ENCODE measurements at regions of chr1 and their contacts with region 1.

Region 1: DNA sequence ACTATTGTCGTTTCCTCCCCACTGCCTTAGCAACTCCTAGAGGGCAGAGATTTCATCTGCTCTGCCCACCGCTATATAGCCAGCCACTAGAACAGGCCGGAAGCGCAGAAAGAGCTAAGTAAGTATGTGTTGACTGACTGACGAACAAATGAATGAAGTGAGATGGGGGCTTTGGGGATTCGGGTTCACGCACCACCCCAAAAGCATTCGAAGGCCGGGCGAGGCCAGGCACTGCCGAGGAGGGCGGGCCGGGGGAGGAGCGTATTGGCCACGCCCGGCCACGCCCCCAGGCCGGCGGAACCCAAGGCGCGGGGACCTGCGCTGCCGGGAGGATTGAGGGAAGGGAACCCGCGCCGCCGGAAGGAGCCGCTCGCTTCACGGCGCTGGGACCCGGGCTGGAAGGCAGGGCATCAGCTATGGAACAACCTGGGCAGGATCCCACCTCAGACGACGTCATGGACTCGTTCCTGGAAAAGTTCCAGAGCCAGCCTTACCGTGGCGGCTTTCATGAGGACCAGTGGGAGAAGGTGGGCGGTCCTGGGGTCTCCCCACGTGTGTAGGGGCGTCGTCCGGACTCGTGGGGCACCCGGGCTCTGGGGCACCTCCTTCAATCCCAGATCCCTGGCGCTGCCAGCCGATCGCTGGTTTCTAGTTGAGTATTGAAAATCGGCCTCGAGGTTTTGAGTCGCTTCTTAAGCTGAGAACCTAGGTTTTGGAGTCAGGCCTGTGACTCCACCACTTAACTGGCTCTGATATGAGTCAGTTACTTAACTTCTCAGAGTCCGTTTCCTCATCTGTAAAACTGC is at the start of gene TTC4:
- DNase-seq: peak; percentile 89
- H3K4me3 ChIP-seq: peak within 1 kb of the TSS; percentile 93
- H3K27ac ChIP-seq: no peak within 1 kb of the TSS
- H3K4me1 ChIP-seq: peaks cover 15% of the 10 kb centered on the region
- CTCF ChIP-seq: no peak
- total RNA-seq, gene TTC4: 20.7 and 26.1 TPM in 2 replicates

Region 2: DNA sequence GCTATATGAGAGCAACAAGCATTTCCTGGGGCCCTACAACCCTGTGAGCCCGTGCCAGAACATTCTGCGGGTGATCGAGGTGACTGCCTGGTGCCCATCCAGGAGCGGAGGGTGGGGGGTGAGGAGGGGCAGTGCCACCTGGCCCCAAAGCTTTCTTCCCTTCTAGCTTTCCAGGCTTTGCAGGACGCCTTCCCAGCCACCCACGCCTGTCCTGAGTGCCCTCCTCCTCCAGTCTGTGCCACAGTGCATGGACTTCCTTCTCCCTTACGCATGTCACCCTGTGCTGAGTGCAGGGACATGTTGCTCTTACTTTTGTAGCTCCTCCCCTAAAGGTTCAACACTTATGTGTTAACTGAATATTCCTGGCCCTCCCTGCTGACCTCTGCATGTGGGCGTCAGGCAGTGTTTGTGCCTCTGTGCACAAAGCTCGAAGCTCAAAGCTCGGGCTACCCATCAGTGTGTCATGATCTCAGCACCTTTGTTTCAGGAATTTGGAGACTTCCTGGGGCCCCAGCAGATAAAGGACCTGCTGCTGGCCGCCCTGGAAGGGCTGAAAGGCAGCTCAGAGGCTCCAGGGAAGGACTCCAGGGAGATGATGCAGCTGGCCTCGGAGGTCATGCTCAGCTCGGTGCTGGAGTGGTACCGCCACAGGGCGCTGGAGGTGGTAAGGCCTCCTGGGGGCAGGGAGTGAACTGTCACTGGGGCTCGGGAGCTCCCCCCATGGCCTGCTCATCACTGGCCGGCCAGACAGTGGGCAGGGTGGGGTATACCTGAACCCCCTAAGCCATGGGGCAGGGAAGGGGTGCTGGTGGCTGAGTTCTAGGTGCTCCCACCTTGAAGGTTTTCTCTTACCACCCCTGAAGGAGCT is 36.7 kb before region 1 on chr1:
- CTCF ChIA-PET with region 1: no interaction called
- POLR2A ChIA-PET with region 1: no interaction called
- intact Hi-C with region 1: no loop called
- DNase-seq: no peak
- H3K4me3 ChIP-seq: no peak overlapping the region
- H3K27ac ChIP-seq: no peak overlapping the region
- H3K4me1 ChIP-seq: no peaks in the 10 kb centered on the region
- CTCF ChIP-seq: no peak

Region 3: DNA sequence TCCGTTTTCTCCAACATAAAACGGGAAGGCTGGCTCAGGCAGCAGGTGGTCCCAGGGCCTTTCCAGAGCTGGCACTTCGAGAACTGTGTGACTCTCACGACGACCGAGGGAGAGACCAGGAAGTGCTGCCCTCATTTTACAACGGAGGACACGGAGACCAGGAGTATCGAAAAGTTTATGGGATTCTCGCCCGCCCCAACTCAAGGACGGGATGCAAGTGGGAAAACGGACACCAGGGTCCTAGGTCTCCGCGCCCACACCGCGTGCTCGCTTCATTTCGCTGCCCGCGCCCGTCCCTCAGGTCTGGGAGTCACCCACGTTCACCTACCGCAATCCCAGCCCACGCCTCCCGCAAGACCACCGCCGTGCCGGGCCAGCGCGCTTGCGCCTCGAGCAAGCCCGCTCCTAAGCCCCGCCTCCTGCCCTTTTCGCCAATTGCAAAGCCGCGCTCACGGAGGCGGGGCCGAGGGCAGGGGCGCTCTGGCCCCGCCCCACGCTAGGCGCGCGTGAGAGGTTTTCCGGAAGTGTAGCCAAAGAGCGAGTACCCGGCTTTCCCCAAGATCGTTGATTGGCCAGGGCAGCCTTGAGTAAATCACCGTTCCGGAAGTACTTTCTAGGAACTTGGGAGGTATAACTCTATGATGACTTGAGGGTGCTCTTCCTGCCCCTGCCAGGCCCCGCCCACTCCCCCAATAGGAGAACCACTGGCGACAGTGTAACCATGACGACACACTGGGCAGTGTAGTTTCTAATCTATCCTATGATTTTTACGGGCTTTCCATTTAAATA is 48.6 kb after region 1 on chr1 and contains the start of gene PARS2:
- CTCF ChIA-PET with region 1: no interaction called
- POLR2A ChIA-PET with region 1: no interaction called
- intact Hi-C with region 1: loop called (anchors 2 kb)
- DNase-seq: peak; percentile 100
- H3K4me3 ChIP-seq: peak within 1 kb of the TSS; percentile 93
- H3K27ac ChIP-seq: no peak within 1 kb of the TSS
- H3K4me1 ChIP-seq: peaks cover 31% of the 10 kb centered on the region
- CTCF ChIP-seq: no peak
- total RNA-seq, gene PARS2: 6.7 and 7.6 TPM in 2 replicates

Measured in OCI-LY7 (cell line).